A549 (cell line): ENCODE measurements at regions of chr11 and their contacts with region 1.

Region 1: DNA sequence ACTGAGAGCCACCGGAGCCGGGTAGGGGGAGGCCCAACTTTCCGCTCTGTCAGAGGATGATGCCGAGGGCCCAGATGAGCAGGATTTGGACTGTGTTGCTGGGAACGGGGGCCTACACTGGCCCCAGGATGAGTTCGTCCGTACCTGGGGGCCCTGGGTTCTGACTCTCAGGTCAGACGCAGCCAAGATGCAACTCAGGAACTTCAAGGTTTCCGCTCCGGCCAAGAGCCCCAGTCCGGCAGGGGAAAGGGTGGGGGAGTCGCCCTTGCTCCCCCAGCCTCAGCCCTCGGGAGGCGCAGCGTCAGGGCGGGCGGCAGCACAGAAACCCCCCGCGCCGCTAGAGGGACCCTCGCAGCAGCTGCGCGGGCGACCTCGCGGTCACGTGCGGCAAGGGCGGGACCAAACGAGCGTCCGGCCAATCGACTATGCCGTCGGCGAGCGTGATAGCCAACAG is 241 bp upstream of the ARL2 start:
- DNase-seq: peak in 1 of 2 experiments; percentile 94
- ATAC-seq: peak; percentile 90 to 92
- H3K4me3 ChIP-seq: peak overlapping the region; percentile 65
- H3K27ac ChIP-seq: peak overlapping the region; percentile 95 to 97
- H3K4me1 ChIP-seq: peaks cover 26% of the 10 kb centered on the region
- CTCF ChIP-seq: no peak; the same call in 1 of the 3 replicates
- EP300 ChIP-seq: no peak
- POLR2A ChIP-seq: peak; percentile 41
- RAD21 ChIP-seq: no peak; a peak in 2 of 5 replicates

Region 2: DNA sequence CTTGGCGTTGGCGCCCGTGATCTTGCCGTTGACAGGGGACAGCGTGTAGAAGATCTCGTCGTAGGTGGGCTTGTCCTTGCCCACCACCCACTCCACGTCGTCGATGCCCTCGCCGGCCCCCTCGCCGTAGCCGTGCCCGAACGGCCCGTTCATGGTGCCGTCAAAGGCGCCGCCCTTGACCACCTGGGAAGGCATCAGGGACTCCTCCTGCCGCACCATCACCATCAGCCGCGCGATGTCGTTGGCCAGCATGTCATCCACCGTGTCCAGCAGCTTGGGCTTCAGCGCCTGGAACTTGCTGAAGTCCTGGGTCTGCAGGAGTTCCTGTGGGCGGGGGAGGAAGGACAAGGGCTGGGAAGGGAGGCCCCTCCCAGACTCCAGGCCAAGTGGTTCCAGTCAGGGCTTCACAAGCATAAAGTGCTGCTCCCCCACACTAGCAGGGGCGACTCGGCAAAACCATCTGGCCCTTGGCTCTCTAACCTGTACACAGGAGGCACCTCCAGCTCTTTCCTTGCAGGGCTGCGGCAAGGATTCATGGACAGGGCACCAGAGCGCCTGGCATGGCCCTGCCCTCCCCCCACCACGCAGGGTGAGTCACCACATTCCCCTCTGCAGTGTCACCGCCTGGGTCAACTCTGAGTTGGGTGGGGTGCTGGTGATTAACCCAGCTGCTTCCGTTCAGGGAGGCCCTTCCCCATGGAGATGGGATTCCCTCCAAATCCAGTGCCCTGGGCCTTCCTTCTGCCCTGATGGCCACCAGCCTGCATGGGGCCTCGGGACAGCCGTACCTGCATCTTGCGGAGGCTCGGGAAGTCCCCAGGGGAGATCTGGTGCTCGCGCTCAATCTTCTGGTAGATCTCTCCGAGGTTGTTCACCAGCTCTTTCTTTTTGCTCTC is 158.9 kb before region 1 on chr11:
- CTCF ChIA-PET with region 1: interaction called, 19 read pairs
- POLR2A ChIA-PET with region 1: no interaction called
- DNase-seq: peak; percentile 97
- ATAC-seq: peak; percentile 85 to 91
- H3K4me3 ChIP-seq: peak overlapping the region; percentile 10; the same call in 1 of the 3 replicates
- H3K27ac ChIP-seq: peak overlapping the region; percentile 91 to 92
- H3K4me1 ChIP-seq: peaks cover 78% of the 10 kb centered on the region
- CTCF ChIP-seq: no peak
- EP300 ChIP-seq: peak; percentile 65 to 82; a peak in 3 of 5 replicates
- POLR2A ChIP-seq: no peak
- RAD21 ChIP-seq: peak; percentile 29 to 30; a peak in 4 of 5 replicates

Region 3: GRCh38 chr11:64894070-64894796 is 119.5 kb before region 1 on chr11:
- CTCF ChIA-PET with region 1: interaction called, 24 read pairs
- POLR2A ChIA-PET with region 1: no interaction called
- DNase-seq: peak; percentile 83 to 84
- ATAC-seq: peak; percentile 63 to 86
- H3K4me3 ChIP-seq: peak overlapping the region; percentile 49; the same call in 2 of the 3 replicates
- H3K27ac ChIP-seq: peak overlapping the region; percentile 92 to 97
- H3K4me1 ChIP-seq: peaks cover 54% of the 10 kb centered on the region
- CTCF ChIP-seq: peak; percentile 93
- EP300 ChIP-seq: no peak
- POLR2A ChIP-seq: peak; percentile 29
- RAD21 ChIP-seq: peak; percentile 85 to 89

Region 4: DNA sequence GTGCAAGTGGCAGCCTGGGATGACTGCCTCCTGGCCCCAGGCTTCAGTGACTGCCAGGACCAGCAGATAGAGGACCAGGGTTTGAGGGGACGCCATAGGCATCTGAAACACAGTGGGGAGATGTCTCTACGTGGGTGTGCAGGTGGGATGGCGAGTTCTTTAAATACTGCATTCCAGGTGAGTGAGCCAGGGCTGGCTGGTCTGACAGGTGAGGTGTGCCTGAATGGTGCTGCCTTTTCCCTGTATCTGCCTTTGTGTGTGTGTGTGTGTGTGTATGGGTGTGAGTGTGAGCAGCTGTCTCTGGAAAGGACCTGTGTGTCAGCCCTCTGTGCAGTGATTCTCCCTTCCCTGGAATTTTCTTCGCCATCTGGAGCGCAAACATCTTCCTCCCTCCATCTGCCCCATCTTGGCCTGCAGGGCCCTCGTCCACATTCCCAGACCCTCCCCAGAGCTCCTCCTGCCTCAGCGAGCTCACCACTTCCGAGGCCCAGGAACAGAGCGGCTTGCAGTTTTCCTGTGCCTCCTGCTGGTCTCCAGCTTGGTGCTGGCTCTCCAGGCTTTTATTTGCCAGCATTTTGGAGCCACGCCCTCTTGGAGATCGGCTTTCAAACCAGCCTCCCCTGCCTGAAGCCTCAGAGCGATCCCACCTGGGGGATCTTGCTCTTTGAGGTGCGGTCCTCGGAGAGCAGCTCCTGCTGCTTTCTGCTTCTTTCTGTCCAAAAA is 78.2 kb before region 1 on chr11 and contains the start of gene GPHA2:
- CTCF ChIA-PET with region 1: interaction called, 11 read pairs
- POLR2A ChIA-PET with region 1: no interaction called
- DNase-seq: no peak
- ATAC-seq: peak in 1 of 2 experiments; percentile 19; a peak in 1 of 6 replicates
- H3K4me3 ChIP-seq: no peak within 1 kb of the TSS
- H3K27ac ChIP-seq: no peak within 1 kb of the TSS
- H3K4me1 ChIP-seq: no peaks in the 10 kb centered on the region
- CTCF ChIP-seq: no peak
- EP300 ChIP-seq: no peak
- POLR2A ChIP-seq: no peak
- RAD21 ChIP-seq: no peak
- polyA plus RNA-seq, gene GPHA2: not detected in 2 replicates

Region 5: GRCh38 chr11:65027213-65028067 is 13.7 kb after region 1 on chr11 and contains the start of gene SNX15:
- CTCF ChIA-PET with region 1: interaction called, 97 read pairs
- POLR2A ChIA-PET with region 1: no interaction called
- DNase-seq: peak; percentile 92 to 97
- ATAC-seq: peak; percentile 95 to 97
- H3K4me3 ChIP-seq: peak within 1 kb of the TSS; percentile 52
- H3K27ac ChIP-seq: peak within 1 kb of the TSS; percentile 89 to 94
- H3K4me1 ChIP-seq: peaks cover 9% of the 10 kb centered on the region
- CTCF ChIP-seq: peak; percentile 52
- EP300 ChIP-seq: no peak
- POLR2A ChIP-seq: peak; percentile 80
- RAD21 ChIP-seq: peak; percentile 26 to 44; a peak in 3 of 5 replicates
- polyA plus RNA-seq, gene SNX15: 13.4 and 15.8 TPM in 2 replicates

Region 6: DNA sequence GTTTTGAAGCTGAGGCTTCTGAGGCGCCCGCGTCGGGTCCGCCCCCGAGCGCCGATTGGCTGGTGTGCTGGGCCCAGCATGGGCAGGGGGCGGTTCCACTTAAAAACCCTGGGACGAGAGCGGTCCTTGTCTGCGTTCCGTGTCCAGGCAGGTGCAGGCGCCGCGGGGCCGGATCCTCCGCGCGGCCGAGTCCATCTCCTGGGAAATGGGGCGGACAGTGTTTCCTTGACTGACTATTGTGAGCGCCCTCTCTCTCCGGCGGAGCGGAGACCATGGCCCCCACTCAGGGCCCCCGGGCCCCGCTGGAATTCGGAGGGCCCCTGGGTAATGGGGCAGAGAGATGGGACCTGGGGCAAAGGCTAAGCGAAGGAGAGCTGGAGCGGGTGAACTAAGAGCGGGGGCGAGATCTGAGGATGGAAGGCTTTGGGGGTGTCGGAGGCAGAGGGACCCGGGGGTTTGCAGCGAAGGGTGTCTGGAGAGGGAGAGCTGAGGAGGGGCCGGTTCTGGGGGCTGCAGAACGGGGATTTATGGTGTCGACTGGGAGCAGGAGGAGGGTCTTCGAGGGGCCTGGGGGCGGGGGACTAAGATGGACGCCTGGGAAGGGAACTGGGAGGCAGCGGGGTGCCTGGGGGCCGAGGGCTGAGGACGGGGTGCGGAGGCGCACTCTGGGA is 98.2 kb after region 1 on chr11 and contains the start of gene TM7SF2:
- CTCF ChIA-PET with region 1: interaction called, 42 read pairs
- POLR2A ChIA-PET with region 1: interaction called, 3 read pairs
- DNase-seq: peak; percentile 95 to 97
- ATAC-seq: peak; percentile 63 to 86
- H3K4me3 ChIP-seq: peak within 1 kb of the TSS; percentile 52
- H3K27ac ChIP-seq: peak within 1 kb of the TSS; percentile 73 to 88
- H3K4me1 ChIP-seq: peaks cover 31% of the 10 kb centered on the region; the same call in 2 of the 3 replicates
- CTCF ChIP-seq: no peak
- EP300 ChIP-seq: no peak
- POLR2A ChIP-seq: peak; percentile 93
- RAD21 ChIP-seq: no peak
- polyA plus RNA-seq, gene TM7SF2: 8.2 and 9.6 TPM in 2 replicates

Region 7: DNA sequence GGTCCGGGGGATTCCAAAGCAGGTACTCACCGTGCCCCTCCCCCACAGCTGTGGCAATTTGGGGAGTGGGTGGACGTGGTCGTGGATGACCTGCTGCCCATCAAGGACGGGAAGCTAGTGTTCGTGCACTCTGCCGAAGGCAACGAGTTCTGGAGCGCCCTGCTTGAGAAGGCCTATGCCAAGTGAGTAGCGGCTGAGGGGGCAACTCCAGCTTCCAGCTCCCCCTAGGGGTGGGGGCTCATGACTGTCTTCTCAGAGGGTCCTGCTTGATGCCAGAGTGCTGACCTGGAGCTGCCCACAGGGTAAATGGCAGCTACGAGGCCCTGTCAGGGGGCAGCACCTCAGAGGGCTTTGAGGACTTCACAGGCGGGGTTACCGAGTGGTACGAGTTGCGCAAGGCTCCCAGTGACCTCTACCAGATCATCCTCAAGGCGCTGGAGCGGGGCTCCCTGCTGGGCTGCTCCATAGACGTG is 172.2 kb after region 1 on chr11:
- CTCF ChIA-PET with region 1: no interaction called
- POLR2A ChIA-PET with region 1: no interaction called
- DNase-seq: no peak
- ATAC-seq: no peak
- H3K4me3 ChIP-seq: no peak overlapping the region
- H3K27ac ChIP-seq: no peak overlapping the region
- H3K4me1 ChIP-seq: peaks cover 11% of the 10 kb centered on the region; the same call in 2 of the 3 replicates
- CTCF ChIP-seq: no peak
- EP300 ChIP-seq: no peak
- POLR2A ChIP-seq: no peak
- RAD21 ChIP-seq: no peak